ENCODE measurements at regions of chr17 and their contacts with region 1.

Region 1: DNA sequence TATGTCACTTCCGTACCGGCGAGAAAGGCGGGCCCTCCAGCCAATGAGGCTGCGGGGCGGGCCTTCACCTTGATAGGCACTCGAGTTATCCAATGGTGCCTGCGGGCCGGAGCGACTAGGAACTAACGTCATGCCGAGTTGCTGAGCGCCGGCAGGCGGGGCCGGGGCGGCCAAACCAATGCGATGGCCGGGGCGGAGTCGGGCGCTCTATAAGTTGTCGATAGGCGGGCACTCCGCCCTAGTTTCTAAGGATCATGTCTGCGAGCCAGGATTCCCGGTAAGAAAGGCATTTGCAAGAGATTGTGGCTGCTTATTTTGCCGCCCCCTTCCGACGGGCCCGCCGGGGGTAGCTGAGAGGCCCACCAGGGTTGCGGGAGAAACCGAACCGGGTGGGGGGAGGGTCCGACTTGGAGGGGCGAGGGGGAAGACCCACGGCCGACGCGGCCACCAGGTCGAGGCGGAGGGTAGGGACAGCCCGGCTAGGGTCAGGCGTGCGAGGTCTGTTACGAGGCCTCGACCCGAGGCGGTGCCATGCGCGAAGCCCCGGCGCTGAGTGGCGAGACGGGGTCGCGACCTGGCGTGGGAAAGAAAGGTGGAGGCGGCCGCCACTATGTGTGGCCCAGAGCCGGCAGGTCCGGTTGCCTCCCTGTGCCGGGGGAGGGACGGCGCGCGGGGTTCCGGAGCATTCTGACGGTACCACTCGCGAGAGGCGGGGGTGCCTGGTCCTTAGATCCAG is 6.7 kb upstream of the CD68 start:
- DNase-seq: peak; percentile 96 to 100
- H3K4me3 ChIP-seq: peak overlapping the region; percentile 91
- H3K27ac ChIP-seq: peak overlapping the region; percentile 90
- H3K4me1 ChIP-seq: peaks cover 33% of the 10 kb centered on the region
- H3K27me3 ChIP-seq: no peaks in the 10 kb centered on the region
- CTCF ChIP-seq: no peak

Region 2: DNA sequence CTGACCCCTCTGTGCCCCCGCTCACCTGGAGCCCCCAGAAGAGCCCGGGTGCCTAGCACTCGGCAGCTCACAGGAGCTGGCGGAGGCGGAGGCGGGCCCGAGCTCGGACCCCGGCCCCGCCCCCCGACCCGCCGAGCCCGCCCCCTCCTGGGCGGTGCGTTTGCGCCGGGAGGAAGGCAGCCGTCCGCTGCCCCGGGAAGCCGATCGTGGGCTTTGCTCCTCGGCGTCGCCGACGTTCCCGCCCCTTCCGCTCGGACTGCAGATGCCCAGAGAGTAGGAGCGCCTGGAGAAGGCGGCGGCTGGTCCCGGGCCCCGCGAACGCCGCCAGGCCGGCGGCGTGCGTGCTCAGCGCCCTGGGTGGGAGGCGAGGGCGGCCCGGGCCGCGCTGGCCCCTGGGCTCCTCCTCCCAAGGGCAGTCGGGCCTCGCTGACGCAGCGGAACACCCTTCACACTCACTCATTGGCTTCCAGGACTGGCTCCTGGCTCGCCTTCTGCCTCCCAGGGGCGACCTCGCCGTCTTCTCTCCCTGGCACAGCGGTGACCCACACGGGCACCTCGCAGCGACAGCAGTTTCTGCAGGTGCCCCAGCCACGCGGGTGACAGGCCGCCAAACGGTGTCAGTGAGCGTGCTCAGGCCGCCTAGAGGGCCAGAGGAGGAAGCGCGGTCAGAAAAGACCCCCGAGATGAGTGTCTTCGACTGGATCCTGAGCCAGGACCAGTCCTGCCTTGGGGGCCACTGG is 178.1 kb before region 1 on chr17 and contains the start of gene PLSCR3:
- CTCF ChIA-PET with region 1: no interaction called
- POLR2A ChIA-PET with region 1: interaction called, 11 read pairs
- intact Hi-C with region 1: no loop called
- DNase-seq: peak; percentile 57 to 95
- H3K4me3 ChIP-seq: peak within 1 kb of the TSS; percentile 78
- H3K27ac ChIP-seq: peak within 1 kb of the TSS; percentile 68
- H3K4me1 ChIP-seq: 0 out of 2 replicates have a peak, but pooled peaks cover 5% of the 10 kb centered on the region
- H3K27me3 ChIP-seq: no peaks in the 10 kb centered on the region
- CTCF ChIP-seq: no peak; the same call in 1 of the 2 replicates
- total RNA-seq, gene PLSCR3: 53.0 and 64.5 TPM in 2 replicates

Region 3: DNA sequence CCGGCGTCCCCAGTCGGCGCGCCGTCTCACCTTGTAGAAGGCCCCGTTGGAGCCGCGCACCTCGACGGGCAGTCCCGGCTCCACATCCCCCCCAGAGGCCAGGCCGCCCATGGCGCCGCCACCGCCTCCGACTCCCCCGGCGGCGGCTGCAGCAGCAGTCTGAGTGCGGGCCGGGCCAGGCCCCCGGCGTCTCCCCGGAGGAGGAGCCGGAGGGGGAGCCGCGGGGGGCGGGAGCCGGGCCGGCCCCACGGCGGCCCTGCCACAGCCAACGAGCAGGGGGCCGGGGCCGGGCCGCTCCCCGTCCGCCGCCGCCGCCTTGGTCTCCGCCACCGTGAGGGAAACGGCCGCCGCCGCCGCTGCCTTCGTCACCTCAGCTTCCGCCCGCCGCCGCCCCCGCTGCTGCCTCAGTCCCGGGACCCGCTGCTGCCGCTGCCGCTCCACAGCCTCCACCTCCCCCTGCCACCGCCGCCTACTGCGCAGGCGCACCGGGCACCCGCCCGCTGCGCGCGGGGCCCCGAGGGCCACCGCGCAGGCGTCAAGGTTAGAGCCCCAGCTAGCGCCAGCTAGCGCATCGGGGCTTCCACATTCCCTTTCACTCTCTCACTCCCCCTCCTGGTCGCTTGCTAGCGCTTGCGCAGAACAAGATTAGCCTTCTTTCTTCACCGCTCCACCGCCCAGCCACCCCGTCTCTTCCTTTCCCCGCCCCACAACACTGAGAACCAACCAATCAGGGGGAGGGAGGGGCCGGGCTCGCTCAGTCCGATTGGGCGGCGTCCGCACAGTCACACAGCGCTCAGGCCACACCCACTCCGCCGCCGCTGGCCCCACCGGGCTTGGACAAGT is 41.9 kb after region 1 on chr17 and contains the start of gene FXR2:
- CTCF ChIA-PET with region 1: no interaction called
- POLR2A ChIA-PET with region 1: no interaction called
- intact Hi-C with region 1: loop called (anchors 2 kb)
- DNase-seq: peak; percentile 94 to 100
- H3K4me3 ChIP-seq: peak within 1 kb of the TSS; percentile 89
- H3K27ac ChIP-seq: peak within 1 kb of the TSS; percentile 73
- H3K4me1 ChIP-seq: peaks cover 22% of the 10 kb centered on the region
- H3K27me3 ChIP-seq: no peaks in the 10 kb centered on the region
- CTCF ChIP-seq: peak; percentile 54; the same call in 1 of the 2 replicates
- total RNA-seq, gene FXR2: 61.5 and 63.7 TPM in 2 replicates

Region 4: GRCh38 chr17:8038954-8039610 is 466.3 kb after region 1 on chr17 and contains the start of gene ALOX15B:
- CTCF ChIA-PET with region 1: no interaction called
- POLR2A ChIA-PET with region 1: no interaction called
- intact Hi-C with region 1: no loop called
- DNase-seq: no peak
- H3K4me3 ChIP-seq: no peak within 1 kb of the TSS
- H3K27ac ChIP-seq: no peak within 1 kb of the TSS
- H3K4me1 ChIP-seq: peaks cover 5% of the 10 kb centered on the region; the same call in 1 of the 2 replicates
- H3K27me3 ChIP-seq: no peaks in the 10 kb centered on the region
- CTCF ChIP-seq: no peak
- total RNA-seq, gene ALOX15B: not detected in 2 replicates

Measured in PC-9 (cell line).